ENCODE measurements at regions of chr2 and their contacts with region 1.

Region 1: GRCh38 chr2:98936353-98937351 is 627 bp upstream of the CRACDL start:
- DNase-seq: peak; percentile 52
- H3K4me3 Mint-ChIP-seq: peak overlapping the region; percentile 53
- H3K27ac Mint-ChIP-seq: no peak overlapping the region
- H3K4me1 Mint-ChIP-seq: peaks cover 3% of the 10 kb centered on the region
- H3K27me3 Mint-ChIP-seq: peaks cover 42% of the 10 kb centered on the region

Region 2: GRCh38 chr2:98634401-98635092 is 302.1 kb before region 1 on chr2:
- CTCF ChIA-PET with region 1: no interaction called
- POLR2A ChIA-PET with region 1: no interaction called
- intact Hi-C with region 1: loop called (anchors 10 kb)
- DNase-seq: peak; percentile 70
- H3K4me3 Mint-ChIP-seq: no peak overlapping the region
- H3K27ac Mint-ChIP-seq: peak overlapping the region; percentile 72
- H3K4me1 Mint-ChIP-seq: peaks cover 35% of the 10 kb centered on the region
- H3K27me3 Mint-ChIP-seq: no peaks in the 10 kb centered on the region

Region 3: GRCh38 chr2:99066075-99066958 is 129.7 kb after region 1 on chr2:
- CTCF ChIA-PET with region 1: interaction called, 3 read pairs
- POLR2A ChIA-PET with region 1: no interaction called
- intact Hi-C with region 1: loop called (anchors 10 kb)
- DNase-seq: peak; percentile 46
- H3K4me3 Mint-ChIP-seq: no peak overlapping the region
- H3K27ac Mint-ChIP-seq: no peak overlapping the region
- H3K4me1 Mint-ChIP-seq: no peaks in the 10 kb centered on the region
- H3K27me3 Mint-ChIP-seq: no peaks in the 10 kb centered on the region